ENCODE measurements at regions of chr9 and their contacts with region 1.

Region 1: GRCh38 chr9:120152295-120152694 is 427.7 kb downstream of the CDK5RAP2 start:
- DNase-seq: no peak
- H3K4me3 ChIP-seq: no peak overlapping the region
- H3K27ac ChIP-seq: no peak overlapping the region
- H3K4me1 ChIP-seq: no peaks in the 10 kb centered on the region
- H3K27me3 ChIP-seq: no peaks in the 10 kb centered on the region
- CTCF ChIP-seq: no peak
- EP300 ChIP-seq: no peak
- POLR2A ChIP-seq: no peak

Region 2: GRCh38 chr9:120080849-120081248 is 71.4 kb before region 1 on chr9:
- intact Hi-C with region 1: loop called in 1 of 4 experiments (anchors 10 kb)
- DNase-seq: no peak
- H3K4me3 ChIP-seq: no peak overlapping the region
- H3K27ac ChIP-seq: no peak overlapping the region
- H3K4me1 ChIP-seq: no peaks in the 10 kb centered on the region
- H3K27me3 ChIP-seq: no peaks in the 10 kb centered on the region
- CTCF ChIP-seq: no peak
- EP300 ChIP-seq: no peak
- POLR2A ChIP-seq: no peak

Measured in ovary (tissue), 10 donors.